Activated T-helper 1 cell treated with anti-CD3 and anti-CD28 coated beads, Interleukin-12 subunit alpha, Interleukin-12 subunit beta, Interleukin-2, Interleukin-4 antibody, amounts not matched to agents 30 ng/mL and 10 ng/mL and 1 ng/mL, durations not matched to agents 14 hours and 24 hours and 36 hours (primary cell): ENCODE measurements at regions of chr2 and their contacts with region 1.

Region 1: GRCh38 chr2:152415231-152415642 is 80.3 kb downstream of the FMNL2 start:
- DNase-seq: no peak
- H3K4me3 Mint-ChIP-seq: peak overlapping the region; percentile 16
- H3K27ac Mint-ChIP-seq: peak overlapping the region; percentile 77
- H3K4me1 Mint-ChIP-seq: peaks cover 41% of the 10 kb centered on the region
- H3K27me3 Mint-ChIP-seq: no peaks in the 10 kb centered on the region

Region 2: DNA sequence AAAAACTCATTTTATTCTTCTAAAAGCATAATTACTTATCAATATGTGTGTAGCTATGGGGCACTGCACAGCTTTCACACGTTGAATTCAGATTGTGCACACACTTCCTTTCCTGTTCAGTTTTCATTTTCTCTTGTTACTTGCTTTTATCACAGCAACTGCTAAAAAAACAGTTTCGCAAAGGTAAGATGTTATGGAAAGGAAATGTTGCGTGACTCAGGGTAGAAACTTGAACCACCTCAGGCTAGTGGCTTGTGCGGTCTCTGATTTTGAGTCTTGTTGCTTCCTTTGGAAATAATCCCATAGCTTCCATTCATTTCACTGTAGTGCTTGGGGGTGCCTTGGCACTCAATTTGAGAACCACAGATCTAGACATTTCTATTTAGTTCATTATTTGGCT is 91.6 kb after region 1 on chr2:
- intact Hi-C with region 1: loop called (anchors 2 kb)
- DNase-seq: peak; percentile 6
- H3K4me3 Mint-ChIP-seq: no peak overlapping the region
- H3K27ac Mint-ChIP-seq: peak overlapping the region; percentile 63
- H3K4me1 Mint-ChIP-seq: peaks cover 20% of the 10 kb centered on the region
- H3K27me3 Mint-ChIP-seq: no peaks in the 10 kb centered on the region